Endothelial cell of umbilical vein (primary cell): ENCODE measurements at regions of chr4 and their contacts with region 1.

Region 1: GRCh38 chr4:82360298-82361177 is 13.3 kb downstream of the HNRNPD start:
- DNase-seq: peak; percentile 58
- H3K4me3 ChIP-seq: no peak overlapping the region
- H3K27ac ChIP-seq: no peak overlapping the region
- H3K4me1 ChIP-seq: no peaks in the 10 kb centered on the region
- H3K27me3 ChIP-seq: no peaks in the 10 kb centered on the region
- CTCF ChIP-seq: peak; percentile 37 to 44
- POLR2A ChIP-seq: no peak

Region 2: GRCh38 chr4:82201805-82202641 is 158.5 kb before region 1 on chr4:
- CTCF ChIA-PET with region 1: no interaction called
- POLR2A ChIA-PET with region 1: no interaction called
- dilution Hi-C with region 1: no loop called
- intact Hi-C with region 1: loop called (anchors 2 kb)
- DNase-seq: peak; percentile 59
- H3K4me3 ChIP-seq: no peak overlapping the region
- H3K27ac ChIP-seq: no peak overlapping the region
- H3K4me1 ChIP-seq: no peaks in the 10 kb centered on the region
- H3K27me3 ChIP-seq: no peaks in the 10 kb centered on the region
- CTCF ChIP-seq: peak; percentile 56 to 58
- POLR2A ChIP-seq: no peak

Region 3: DNA sequence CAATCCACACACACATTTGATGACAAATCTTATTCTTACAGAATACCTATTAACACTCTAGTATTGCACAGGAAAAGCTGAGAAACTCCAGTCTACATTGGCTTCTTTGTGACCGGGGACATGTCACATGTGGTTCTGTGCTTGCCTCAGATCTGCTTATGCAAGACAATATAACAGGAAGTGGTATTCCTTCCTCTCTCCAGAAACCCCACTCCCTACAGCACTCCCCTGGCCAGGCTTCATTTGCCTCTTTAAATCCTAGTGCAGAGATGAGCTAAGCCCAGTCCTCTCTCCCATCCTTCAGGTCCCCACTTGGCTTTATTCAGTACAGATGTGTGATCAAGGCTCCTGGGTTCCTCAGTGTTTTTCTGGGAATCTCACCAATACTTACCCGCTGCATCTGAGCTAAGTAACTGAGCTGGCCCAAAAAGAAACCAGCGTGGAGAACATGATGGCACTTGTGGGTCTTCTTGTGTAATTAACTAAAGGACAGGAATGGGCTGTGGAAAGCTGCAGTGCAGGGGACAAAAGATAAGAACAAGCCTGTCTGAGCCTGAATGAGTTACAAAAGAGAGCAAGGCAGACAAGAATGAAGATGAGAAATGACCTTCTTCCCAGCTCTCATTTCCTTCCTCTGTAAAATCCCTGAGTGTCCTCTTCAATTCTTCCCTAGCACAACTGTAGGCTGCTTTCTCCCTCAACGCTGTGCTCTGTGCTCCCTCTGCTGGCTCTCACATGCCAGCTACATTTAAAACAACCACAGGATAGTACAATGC is 92.3 kb before region 1 on chr4:
- CTCF ChIA-PET with region 1: interaction called, 11 read pairs
- POLR2A ChIA-PET with region 1: no interaction called
- dilution Hi-C with region 1: no loop called
- intact Hi-C with region 1: no loop called
- DNase-seq: peak; percentile 37
- H3K4me3 ChIP-seq: no peak overlapping the region
- H3K27ac ChIP-seq: no peak overlapping the region
- H3K4me1 ChIP-seq: no peaks in the 10 kb centered on the region
- H3K27me3 ChIP-seq: peaks cover 3% of the 10 kb centered on the region in 2 experiments
- CTCF ChIP-seq: peak; percentile 54 to 73
- POLR2A ChIP-seq: no peak

Region 4: DNA sequence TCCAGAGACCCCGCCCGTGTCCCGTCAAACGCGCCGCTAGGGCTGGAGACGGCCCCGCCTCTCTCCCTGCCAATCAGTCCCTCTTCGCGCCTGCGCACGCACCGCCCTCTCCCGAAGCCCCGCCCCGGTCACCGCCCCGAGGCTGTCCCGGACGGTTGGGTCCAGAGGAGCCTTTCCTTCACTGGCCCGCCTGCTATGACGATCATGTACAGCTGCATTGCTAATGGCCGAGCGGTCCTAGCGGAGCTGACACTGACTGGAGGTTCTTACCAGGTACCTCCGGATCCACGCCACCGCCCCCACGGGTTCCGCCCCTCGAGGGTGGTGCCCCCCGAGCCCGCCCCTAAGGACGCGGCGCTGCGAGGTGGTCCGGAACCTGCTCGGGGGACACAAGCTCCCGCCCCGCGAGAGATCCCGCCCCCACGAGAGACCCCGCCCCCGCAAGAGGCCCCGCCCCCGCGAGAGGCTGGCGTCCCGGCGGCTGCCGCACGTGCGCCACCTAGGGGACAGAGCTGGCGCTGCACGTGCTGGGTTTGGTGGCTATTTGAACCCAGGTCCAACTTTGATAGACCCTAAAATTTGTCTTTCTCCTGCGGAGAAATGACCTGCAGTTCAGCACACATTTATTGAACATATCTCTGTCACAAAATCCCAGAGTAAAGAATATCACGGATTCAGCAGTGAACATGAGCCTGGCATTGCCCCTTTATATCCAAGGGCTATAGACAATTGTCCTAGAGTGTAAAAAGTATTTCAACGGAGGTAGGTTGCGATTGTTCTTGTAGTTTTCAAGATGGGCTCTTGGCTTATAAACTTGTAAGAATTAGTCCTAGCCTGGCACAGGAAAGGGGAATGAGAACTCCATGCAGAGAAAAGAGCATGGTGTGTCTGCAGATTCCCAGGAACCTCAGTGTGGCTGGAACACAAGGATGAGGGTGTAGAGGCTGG is 75.4 kb before region 1 on chr4:
- CTCF ChIA-PET with region 1: interaction called, 21 read pairs
- POLR2A ChIA-PET with region 1: no interaction called
- dilution Hi-C with region 1: no loop called
- intact Hi-C with region 1: loop called (anchors 1 kb)
- DNase-seq: peak; percentile 99
- H3K4me3 ChIP-seq: peak overlapping the region in 2 of 3 experiments; percentile 40 to 44
- H3K27ac ChIP-seq: no peak overlapping the region
- H3K4me1 ChIP-seq: peaks cover 6% of the 10 kb centered on the region
- H3K27me3 ChIP-seq: peaks cover 13 to 16% of the 10 kb centered on the region in 2 experiments
- CTCF ChIP-seq: peak; percentile 69 to 90
- POLR2A ChIP-seq: no peak

Region 5: DNA sequence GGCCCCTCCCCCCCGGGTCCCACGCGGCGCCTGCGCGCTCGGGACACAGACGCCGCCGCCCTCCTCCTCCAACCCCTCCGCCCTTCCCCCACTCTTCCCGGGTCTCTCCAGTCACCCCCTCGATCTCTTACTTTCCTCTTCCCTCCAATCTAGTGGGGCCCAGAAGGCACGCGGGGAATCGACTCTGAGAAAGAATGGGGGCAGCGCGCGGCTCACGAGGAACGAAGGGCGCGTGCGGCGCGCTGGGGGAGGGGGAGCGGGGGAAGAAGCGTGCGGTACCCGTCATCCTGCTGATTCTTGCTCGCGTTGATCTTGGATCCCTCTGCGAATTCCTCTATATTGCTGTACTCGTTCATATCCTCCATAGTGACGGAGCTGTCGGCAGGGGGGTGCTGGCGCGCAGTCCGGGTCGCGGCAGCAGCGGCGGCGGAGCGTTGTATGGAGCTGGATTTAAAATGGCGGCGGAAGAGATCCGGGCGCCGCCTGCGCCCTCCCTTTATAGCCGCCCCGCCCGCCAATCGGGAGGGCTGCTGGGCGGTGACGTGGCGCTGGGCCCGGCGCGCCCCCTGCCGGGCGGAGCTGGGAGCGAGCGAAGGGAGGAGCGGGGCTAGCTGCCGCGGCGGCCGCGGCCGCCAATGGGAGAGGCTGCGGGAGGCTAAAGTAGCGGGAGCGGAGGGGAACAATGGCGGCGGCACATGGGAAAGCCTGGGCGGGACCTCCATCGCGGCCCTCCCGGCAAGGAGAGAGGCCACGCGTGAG is 68.6 kb after region 1 on chr4:
- CTCF ChIA-PET with region 1: interaction called, 10 read pairs
- POLR2A ChIA-PET with region 1: interaction called, 4 read pairs
- dilution Hi-C with region 1: no loop called
- intact Hi-C with region 1: no loop called
- DNase-seq: peak; percentile 95
- H3K4me3 ChIP-seq: peak overlapping the region; percentile 89 to 100 (median 98)
- H3K27ac ChIP-seq: peak overlapping the region; percentile 99
- H3K4me1 ChIP-seq: peaks cover 31% of the 10 kb centered on the region
- H3K27me3 ChIP-seq: no peaks in the 10 kb centered on the region
- CTCF ChIP-seq: peak; percentile 80 to 99
- POLR2A ChIP-seq: peak; percentile 60